Head of caudate nucleus (tissue), 42 donors: ENCODE measurements at regions of chr13 and their contacts with region 1.

Region 1: DNA sequence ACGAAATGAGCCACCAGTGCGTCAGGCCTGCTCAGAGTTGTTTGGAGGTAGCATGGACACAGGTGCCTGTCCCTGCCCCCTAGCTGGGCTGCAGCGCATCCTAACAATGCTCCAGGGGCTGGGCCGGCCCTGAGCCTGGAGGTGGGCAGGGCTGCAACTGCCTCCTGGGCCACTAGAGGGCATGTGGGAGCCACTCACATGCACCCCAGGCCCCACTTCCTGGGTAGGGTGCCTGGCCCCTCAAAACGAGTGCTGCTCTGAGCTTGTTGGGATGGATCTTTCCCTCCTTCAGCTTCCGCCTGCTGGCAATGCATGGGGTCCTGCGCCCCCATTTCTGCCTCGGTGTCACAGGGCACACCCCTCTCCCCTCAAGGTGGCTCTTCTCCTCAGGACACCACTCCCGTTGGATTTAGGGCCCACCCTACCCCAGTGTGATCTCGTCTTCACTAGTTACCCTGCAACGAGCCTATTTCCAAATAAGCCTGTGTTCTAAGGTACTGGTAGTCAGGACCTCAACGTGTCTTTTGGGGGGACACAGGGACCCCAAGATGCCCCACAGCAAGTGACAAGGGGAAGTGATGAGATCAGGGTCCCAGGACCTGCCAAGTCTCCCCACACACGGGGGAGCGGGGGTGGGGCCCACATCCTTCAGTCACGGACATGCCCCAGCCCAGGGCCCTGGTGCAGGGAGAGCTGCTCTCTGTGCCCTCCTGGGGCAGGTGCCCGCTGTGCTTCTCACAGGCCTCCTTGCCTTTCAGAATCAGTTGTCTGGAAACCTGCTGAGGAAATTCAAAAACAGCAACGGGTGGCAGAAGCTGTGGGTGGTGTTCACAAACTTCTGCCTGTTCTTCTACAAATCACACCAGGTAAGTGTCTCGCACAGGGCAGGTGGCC is 131.3 kb downstream of the STK24 start:
- DNase-seq: peak; percentile 44 to 88 (median 69)

Region 2: GRCh38 chr13:98300956-98301641 is 144.5 kb before region 1 on chr13:
- intact Hi-C with region 1: no loop called
- DNase-seq: peak in 4 of 42 donors; percentile 8 to 41 (median 23)

Region 3: GRCh38 chr13:98653463-98653985 is 207.9 kb after region 1 on chr13:
- intact Hi-C with region 1: loop called (anchors 5 kb)
- DNase-seq: peak; percentile 60 to 91 (median 78)

Region 4: DNA sequence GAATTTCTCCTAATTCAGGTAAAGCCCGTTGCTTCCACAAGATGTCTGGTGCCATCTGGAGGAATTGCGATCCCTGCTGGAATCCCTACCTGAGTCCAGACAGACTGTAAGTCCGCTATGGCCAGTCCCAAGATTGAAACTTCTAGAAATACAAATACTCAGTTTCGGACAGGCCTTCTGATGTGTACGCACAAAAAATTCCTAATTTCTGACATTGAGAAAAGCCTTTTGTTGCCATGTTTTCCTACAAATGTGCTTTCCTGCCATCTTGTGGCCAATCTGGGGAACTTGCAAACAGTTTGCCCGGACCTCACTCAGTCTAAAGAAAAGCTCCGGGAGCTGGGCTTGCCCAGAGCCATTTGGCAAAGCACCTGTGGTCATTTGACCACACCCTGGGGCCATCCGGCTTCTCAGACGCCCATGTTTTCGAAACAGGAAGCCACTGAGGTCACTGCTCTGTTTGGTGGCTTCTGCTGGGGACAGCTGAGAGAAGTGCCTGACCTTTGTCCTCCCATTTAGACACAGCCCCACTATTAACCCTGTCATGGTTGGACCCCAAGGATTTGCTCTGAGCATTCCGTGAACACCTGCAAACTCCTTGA is 227.5 kb after region 1 on chr13:
- intact Hi-C with region 1: loop called (anchors 5 kb)
- DNase-seq: peak in 41 of 42 donors; percentile 12 to 83 (median 55)